ENCODE measurements at regions of chr17 and their contacts with region 1.

Region 1: DNA sequence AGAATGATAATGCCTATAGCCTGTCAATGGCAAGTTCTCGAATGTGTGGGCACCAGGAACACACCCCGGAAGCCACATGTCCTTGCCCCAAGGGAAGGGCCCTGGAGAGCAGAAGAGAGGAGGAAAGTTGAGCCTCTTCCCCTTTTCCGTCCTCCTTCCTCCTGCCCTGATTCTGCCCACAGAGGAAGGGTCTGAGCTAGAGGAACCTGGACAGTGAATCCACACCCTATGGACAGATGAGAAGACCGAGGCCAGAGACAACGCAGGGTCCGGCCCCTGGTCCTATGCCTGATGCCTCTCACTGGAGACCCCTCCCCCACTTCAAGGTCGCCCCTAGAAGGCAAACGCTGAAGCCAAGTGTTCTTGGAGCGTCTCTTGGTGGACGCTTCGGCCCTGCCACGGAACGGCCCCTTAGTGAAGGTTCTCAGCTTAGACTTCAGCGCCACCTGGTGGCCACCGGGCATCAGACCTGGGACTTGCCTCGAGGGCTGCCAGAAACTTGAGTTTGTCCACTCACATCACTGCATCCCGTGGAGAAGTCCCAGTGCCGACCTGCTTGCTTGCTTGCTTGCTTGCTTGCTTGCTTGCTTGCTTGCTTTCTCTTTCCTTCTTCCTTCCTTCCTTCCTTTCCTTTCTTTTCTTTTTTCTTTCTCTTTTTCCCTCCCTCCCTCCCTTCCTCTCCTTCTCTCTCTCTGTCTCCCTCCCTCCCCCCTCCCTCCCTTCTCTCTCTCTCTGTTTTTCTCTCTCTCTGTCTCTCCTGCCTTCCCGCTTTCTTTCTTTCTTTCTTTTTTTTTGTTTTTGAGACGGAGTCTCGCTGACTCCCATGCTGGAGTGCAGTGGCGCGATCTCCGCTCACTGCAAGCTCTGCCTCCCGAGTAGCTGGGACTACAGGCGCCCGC is 20.6 kb upstream of the SPNS3 start:
- DNase-seq: peak; percentile 89
- ATAC-seq: peak; percentile 97
- H3K4me3 Mint-ChIP-seq: peak overlapping the region; percentile 70
- H3K27ac Mint-ChIP-seq: peak overlapping the region; percentile 52
- H3K4me1 Mint-ChIP-seq: peaks cover 6% of the 10 kb centered on the region
- H3K27me3 Mint-ChIP-seq: no peaks in the 10 kb centered on the region
- CTCF ChIP-seq: peak; percentile 57

Region 2: DNA sequence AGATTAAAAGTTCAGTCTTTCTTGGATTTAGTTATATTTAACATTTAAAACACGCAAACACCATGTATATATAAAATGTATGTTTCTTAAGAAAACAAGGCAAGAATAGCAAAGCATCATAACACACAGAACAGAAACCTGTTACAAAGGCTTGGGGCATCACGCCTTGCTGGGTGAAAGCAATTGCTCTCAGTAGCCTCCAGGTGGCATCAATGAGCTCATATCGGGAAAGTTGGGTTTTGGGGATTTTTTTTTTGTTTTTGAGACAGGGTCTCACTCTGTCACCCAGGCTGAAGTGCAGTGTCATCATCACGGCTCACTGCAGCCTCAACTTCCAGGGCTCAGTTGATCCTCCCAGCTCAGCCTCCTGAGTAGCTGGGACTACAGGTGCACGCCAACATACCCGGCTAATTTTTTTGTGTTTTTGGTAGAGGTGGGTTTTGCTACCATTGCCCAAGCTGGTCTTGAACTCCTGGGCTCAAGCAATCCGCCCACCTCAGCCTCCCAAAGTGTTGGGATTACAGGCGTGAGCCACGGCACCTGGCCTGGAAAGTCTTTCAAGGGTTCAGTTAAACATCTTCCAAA is 213.3 kb before region 1 on chr17:
- CTCF ChIA-PET with region 1: interaction called, 17 read pairs
- POLR2A ChIA-PET with region 1: interaction called, 4 read pairs
- intact Hi-C with region 1: loop called (anchors 1 kb)
- DNase-seq: no peak
- ATAC-seq: peak; percentile 67
- H3K4me3 Mint-ChIP-seq: no peak overlapping the region
- H3K27ac Mint-ChIP-seq: no peak overlapping the region
- H3K4me1 Mint-ChIP-seq: no peaks in the 10 kb centered on the region
- H3K27me3 Mint-ChIP-seq: no peaks in the 10 kb centered on the region
- CTCF ChIP-seq: no peak

Region 3: DNA sequence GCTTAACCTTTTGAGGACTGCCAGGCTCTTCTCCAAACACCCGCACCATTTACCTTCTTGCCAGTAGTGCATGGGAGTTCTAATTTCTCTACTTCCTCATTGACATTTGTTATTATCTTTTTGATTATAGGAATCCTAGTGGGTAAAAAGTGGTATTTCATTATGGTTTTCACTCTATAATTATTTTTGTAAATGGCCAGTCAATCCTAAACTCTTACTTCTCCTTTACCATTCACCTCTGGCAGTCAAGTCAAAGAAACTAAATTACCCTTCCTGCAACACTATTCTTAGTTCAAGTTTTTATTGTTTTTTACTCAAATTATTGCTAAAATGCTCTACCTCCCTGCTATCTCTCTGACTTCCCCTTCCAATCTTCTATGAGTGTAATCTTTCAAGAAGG is 119.6 kb before region 1 on chr17:
- CTCF ChIA-PET with region 1: no interaction called
- POLR2A ChIA-PET with region 1: no interaction called
- intact Hi-C with region 1: loop called (anchors 1 kb)
- DNase-seq: no peak
- ATAC-seq: peak; percentile 72
- H3K4me3 Mint-ChIP-seq: no peak overlapping the region
- H3K27ac Mint-ChIP-seq: no peak overlapping the region
- H3K4me1 Mint-ChIP-seq: peaks cover 33% of the 10 kb centered on the region
- H3K27me3 Mint-ChIP-seq: no peaks in the 10 kb centered on the region
- CTCF ChIP-seq: no peak

Region 4: DNA sequence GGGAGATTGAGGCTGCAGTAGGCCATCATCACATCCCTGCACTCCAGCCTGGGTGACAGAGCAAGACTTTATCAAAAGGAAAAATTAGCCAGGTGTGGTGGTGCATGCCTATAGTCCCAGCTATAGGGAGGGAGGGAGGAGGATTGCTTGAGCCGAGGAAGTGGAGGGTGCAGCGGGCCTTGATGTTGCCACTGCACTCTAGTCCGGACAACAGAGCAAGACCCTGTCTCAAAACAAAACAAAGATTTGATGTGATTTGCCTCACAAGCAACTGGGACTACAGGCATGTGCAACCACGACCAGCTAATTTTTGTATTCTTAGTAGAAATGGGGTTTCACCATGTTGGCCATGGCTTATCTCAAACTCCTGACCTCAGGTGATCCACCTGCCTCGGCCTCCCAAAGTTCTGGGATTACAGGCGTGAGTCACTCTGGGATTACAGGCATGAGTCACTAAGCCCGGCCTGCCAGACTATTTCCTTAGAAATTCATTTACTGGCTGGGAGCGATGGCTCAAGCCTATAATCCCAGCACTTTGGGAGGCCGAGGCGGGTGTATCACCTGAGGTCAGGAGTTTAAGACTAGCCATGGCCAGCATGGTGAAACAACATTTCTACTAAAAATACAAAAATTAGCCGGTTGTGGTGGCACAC is 58.2 kb before region 1 on chr17:
- CTCF ChIA-PET with region 1: no interaction called
- POLR2A ChIA-PET with region 1: interaction called, 10 read pairs
- intact Hi-C with region 1: no loop called
- DNase-seq: no peak
- ATAC-seq: no peak
- H3K4me3 Mint-ChIP-seq: no peak overlapping the region
- H3K27ac Mint-ChIP-seq: no peak overlapping the region
- H3K4me1 Mint-ChIP-seq: peaks cover 64% of the 10 kb centered on the region
- H3K27me3 Mint-ChIP-seq: no peaks in the 10 kb centered on the region
- CTCF ChIP-seq: no peak

Region 5: GRCh38 chr17:4375039-4375748 is 38.0 kb before region 1 on chr17:
- CTCF ChIA-PET with region 1: no interaction called
- POLR2A ChIA-PET with region 1: no interaction called
- intact Hi-C with region 1: loop called (anchors 1 kb)
- DNase-seq: no peak
- ATAC-seq: peak; percentile 88
- H3K4me3 Mint-ChIP-seq: peak overlapping the region; percentile 53
- H3K27ac Mint-ChIP-seq: peak overlapping the region; percentile 85
- H3K4me1 Mint-ChIP-seq: peaks cover 45% of the 10 kb centered on the region
- H3K27me3 Mint-ChIP-seq: no peaks in the 10 kb centered on the region
- CTCF ChIP-seq: no peak

Region 6: DNA sequence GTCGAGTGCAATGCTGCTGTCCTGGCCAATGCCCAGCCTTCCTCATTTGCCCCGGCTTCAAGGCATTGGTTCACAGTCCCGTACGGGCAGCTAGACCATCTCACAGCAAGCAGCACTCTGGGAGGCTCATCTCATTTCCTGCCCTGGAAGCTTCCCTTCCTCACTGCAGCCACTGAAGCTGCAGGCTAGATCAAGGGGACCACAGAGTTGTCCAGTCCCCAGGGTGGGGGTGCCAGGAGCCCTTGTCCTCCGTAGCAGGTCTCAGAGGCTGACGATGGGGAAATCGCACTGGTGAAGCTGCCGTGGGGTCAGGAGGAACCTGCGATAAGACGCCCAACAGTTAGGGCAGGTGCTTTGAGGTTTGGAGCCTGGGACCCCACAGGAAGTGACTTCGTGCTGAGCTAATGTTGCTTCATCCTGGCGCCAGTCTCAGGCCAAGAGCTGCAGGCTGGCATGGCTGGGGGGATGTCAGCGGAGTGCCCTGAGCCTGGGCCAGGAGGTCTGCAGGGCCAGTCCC is 20.4 kb after region 1 on chr17 and contains the start of gene SPNS3:
- CTCF ChIA-PET with region 1: no interaction called
- POLR2A ChIA-PET with region 1: no interaction called
- intact Hi-C with region 1: no loop called
- DNase-seq: peak; percentile 26
- ATAC-seq: peak; percentile 80
- H3K4me3 Mint-ChIP-seq: peak within 1 kb of the TSS; percentile 55
- H3K27ac Mint-ChIP-seq: no peak within 1 kb of the TSS
- H3K4me1 Mint-ChIP-seq: peaks cover 19% of the 10 kb centered on the region
- H3K27me3 Mint-ChIP-seq: peaks cover 3% of the 10 kb centered on the region
- CTCF ChIP-seq: no peak
- total RNA-seq, gene SPNS3: 1.1 and 2.5 TPM in 2 replicates

Measured in activated B cell treated with CpG ODN at 0.5 μM for 24 hours (primary cell).